Cardiac septum (tissue), 1 donor: ENCODE measurements at regions of chr17 and their contacts with region 1.

Region 1: DNA sequence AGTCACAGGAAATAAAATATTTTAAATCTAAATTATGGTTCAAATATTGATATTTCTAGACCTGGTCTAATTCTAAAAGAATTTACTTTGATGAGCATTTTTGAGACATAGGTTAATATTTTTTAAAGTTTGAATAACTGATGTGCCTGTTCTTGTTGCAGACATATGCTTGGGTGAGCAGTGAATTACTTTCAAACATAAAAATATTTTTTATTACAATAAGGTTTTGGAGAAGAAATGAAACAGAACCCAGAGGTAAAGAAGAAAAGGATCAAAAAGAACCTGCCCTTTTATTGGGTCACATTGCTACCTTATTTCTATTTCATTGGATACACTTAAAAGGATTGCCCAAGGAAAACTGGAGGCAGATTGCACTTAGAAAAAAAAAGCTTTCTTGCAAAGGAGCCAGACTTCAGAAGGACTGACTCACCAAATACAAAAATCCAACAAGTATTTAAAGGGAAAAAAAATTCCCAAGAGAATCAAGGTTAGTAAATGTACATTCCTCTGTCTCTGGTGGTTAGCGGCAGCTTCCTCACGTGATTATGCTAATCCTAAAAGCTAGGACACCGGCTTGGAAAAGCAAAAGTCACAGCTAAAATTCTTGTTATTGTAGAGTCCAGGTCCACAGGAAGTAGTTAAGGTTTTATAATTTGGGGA is 18.5 kb downstream of the ENPP7 start:
- DNase-seq: no peak

Region 2: GRCh38 chr17:79803997-79804855 is 54.9 kb after region 1 on chr17:
- intact Hi-C with region 1: loop called (anchors 5 kb)
- DNase-seq: no peak

Region 3: DNA sequence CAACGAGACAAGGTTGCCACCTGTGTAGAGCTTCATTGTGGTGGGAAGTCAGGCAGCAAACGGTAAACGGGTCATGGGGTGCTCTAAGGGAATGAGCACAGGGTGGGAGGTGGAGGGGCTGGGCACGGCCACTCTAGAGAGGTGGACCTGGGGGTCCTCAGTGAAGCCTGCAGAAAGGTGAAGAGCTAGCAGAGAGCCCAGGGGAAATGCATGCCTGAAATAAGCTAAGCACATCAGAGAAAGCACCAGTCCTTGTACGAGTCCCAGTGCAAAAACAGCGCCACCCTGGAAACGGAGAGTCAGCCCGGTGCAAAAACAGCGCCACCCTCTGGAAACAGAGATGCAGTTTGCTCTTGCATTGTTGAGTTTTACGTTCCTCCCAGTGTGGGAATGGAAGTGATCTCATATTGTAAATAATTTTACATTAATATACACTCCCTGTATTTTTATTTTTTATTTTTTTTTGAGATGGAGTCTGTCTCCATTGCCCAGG is 221.3 kb after region 1 on chr17:
- intact Hi-C with region 1: loop called (anchors 5 kb)
- DNase-seq: peak; percentile 67